ENCODE measurements at regions of chr9 and their contacts with region 1.

Region 1: GRCh38 chr9:72827950-72828731 is 124.7 kb downstream of the ALDH1A1 start:
- DNase-seq: peak; percentile 13
- H3K4me3 ChIP-seq: no peak overlapping the region
- H3K27me3 ChIP-seq: peaks cover 3% of the 10 kb centered on the region; the same call in 1 of the 2 replicates
- CTCF ChIP-seq: no peak

Region 2: GRCh38 chr9:72271613-72272478 is 556.3 kb before region 1 on chr9:
- CTCF ChIA-PET with region 1: interaction called, 39 read pairs
- POLR2A ChIA-PET with region 1: no interaction called
- DNase-seq: no peak
- H3K4me3 ChIP-seq: no peak overlapping the region
- H3K27me3 ChIP-seq: peaks cover 2% of the 10 kb centered on the region
- CTCF ChIP-seq: peak; percentile 77

Region 3: GRCh38 chr9:72280913-72281500 is 547.1 kb before region 1 on chr9:
- CTCF ChIA-PET with region 1: interaction called, 190 read pairs
- POLR2A ChIA-PET with region 1: no interaction called
- DNase-seq: peak; percentile 14
- H3K4me3 ChIP-seq: no peak overlapping the region
- H3K27me3 ChIP-seq: peaks cover 2% of the 10 kb centered on the region; the same call in 1 of the 2 replicates
- CTCF ChIP-seq: peak; percentile 95

Region 4: DNA sequence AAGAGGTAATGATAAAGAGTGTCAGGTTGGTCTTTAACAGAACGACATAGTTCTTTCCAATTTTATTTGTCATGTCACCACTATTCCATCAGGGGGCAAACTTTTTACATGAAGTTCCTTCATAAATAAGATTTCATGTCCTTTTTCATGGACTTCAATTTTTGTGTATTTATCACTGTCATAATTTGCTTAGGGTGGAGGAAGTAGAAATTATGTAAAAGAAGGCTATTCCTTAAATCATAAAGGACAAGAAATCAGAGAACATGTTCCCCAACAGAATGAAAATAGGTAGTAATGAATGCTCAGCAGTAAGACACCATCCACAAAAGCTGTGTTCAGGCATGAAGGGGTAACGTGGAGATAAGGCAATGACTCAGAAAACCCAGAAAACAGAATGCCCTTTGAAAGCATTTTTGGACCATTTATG is 535.9 kb before region 1 on chr9:
- CTCF ChIA-PET with region 1: interaction called, 34 read pairs
- POLR2A ChIA-PET with region 1: no interaction called
- DNase-seq: no peak
- H3K4me3 ChIP-seq: no peak overlapping the region
- H3K27me3 ChIP-seq: peaks cover 3% of the 10 kb centered on the region; the same call in 1 of the 2 replicates
- CTCF ChIP-seq: peak; percentile 50

Region 5: DNA sequence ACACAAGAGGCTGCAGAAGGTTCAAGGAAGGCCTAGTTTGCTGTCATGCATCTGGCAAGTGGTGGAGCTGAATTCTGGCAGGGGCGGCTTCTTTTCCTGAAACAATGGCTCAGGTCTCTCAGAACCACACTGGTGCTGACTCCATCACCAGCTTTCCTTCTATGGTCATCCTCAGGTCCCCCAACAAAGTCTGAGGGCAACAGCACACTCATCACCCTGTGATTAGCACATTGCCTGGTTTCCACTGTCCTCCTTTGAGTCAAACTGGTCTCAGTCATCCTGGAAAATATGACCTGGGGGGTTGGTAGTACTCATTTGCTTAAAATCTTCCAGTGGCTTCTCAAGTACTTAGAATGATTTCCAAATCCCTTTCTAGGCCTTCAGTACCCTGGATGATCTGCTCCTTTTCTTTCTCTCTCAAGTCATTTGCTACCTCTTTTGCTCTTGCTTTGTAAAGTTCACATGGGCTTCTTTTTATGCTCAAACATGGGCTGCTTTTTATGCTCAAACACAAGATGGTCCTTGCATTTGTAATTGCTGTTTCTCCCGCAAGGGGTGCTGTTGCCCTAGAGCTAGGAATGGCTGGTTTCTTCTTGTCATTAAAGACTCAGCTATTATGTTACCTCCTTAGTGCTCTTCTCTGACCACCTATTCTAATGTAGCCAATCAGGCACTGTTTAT is 20.2 kb before region 1 on chr9:
- CTCF ChIA-PET with region 1: interaction called, 20 read pairs
- POLR2A ChIA-PET with region 1: no interaction called
- DNase-seq: no peak
- H3K4me3 ChIP-seq: no peak overlapping the region
- H3K27me3 ChIP-seq: 0 out of 2 replicates have a peak, but pooled peaks cover 2% of the 10 kb centered on the region
- CTCF ChIP-seq: peak; percentile 20; the same call in 1 of the 2 replicates